Psoas muscle (tissue), 8 donors: ENCODE measurements at regions of chr17 and their contacts with region 1.

Region 1: DNA sequence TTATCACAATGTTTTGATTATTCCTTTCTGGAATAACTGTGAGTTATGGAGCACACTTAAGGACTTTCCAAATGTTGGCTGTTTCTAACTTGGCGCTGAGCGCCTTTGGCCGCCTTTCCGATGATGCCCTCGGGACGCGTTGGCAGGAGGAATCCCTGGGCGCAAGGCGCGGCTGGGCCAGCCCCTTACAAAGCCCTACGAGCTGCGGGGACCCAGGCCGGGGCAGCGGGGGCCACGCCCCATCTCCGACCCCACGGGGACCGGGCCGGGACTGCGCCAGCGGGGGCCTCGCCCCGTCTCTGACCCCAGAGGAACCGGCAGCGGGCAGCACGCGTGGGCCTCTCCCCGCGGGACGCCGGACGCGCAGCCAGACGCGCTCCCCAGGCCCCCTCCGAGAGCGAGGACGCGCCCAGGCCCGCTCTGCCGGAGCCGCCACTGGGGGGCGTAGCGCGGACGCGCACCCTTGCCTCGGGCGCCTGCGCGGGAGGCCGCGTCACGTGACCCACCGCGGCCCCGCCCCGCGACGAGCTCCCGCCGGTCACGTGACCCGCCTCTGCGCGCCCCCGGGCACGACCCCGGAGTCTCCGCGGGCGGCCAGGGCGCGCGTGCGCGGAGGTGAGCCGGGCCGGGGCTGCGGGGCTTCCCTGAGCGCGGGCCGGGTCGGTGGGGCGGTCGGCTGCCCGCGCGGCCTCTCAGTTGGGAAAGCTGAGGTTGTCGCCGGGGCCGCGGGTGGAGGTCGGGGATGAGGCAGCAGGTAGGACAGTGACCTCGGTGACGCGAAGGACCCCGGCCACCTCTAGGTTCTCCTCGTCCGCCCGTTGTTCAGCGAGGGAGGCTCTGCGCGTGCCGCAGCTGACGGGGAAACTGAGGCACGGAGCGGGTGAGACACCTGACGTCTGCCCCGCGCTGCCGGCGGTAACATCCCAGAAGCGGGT is at the start of gene GAA:
- DNase-seq: peak; percentile 88 to 94
- ATAC-seq: peak; percentile 91 to 95 (median 93)
- H3K4me3 ChIP-seq: peak within 1 kb of the TSS; percentile 97
- H3K27ac ChIP-seq: peak within 1 kb of the TSS; percentile 86
- H3K4me1 ChIP-seq: peaks cover 13% of the 10 kb centered on the region
- H3K27me3 ChIP-seq: no peaks in the 10 kb centered on the region
- CTCF ChIP-seq: peak; percentile 83
- total RNA-seq, gene GAA: 27.3 to 42.4 (median 34.3) TPM

Region 2: DNA sequence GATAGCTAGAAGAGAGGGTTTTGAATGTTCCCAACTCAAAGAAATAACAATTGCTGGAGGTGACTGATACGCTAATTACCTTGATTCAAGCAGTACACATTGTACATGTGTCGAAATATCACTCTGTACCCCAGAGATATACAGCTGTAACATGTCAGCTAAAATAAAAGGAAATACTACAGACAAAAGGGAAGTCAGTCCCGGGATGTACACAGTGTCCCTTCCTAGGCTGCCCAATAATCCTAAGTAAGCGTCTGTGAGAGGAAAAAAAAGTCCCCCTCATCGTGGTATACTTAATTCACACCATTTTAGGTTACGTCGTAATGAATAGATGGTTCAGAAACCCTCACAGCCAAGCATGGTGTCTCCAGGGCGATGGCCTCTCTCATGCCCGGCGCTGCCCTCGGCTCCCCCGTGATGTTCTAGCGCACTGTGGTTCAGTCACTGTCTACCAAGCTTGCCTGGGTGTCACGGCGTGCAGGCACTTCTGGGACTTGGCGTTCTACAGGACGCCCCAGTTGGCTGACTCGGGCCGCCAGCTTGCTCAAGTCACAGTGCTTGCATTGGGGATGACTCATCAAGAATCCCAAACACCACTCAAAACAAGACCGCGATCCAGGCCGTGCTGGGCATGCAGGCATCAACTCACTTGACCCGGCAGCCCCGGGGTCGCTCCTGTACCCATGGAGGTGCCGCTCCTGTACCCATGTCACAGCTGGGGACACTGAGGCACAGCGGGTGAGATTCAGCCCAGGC is 37.3 kb before region 1 on chr17:
- intact Hi-C with region 1: no loop called
- DNase-seq: peak; percentile 76 to 84
- ATAC-seq: peak; percentile 82 to 96 (median 94)
- H3K4me3 ChIP-seq: no peak overlapping the region
- H3K27ac ChIP-seq: no peak overlapping the region
- H3K4me1 ChIP-seq: peaks cover 8% of the 10 kb centered on the region
- H3K27me3 ChIP-seq: no peaks in the 10 kb centered on the region
- CTCF ChIP-seq: no peak

Region 3: DNA sequence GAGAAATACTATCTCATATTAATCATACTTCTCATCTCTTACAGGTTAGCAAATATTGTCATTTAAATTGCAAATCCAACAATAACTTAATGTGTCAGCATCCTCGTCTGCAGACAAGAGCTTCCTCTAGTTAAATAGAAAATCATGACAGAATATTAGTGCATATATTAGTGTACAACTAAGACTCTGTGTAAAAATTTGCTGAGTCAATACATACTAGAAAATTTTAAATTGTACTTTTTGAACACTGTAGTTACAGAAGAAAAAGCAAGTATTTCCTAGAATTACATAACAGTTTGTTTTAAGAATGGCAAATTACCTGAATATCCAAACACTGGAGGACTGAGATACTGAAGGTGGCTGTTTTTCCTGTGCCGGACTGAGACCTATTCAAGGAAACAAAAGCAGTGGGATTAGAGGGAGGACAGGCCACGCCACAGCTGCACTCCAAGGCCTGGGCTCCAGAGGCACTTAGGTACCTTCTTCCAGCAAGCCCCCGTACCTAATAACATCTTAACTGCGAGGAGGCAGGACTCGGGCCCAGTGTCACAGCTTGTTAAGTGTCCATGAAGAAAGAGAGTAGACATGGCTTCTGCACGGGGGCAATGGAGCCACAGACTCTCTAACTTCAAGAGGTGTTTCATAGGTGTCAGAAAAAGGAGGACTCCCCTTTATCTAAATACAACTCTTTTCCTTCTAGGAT is 40.3 kb after region 1 on chr17:
- intact Hi-C with region 1: loop called in 1 of 2 experiments (anchors 5 kb)
- DNase-seq: no peak
- ATAC-seq: no peak
- H3K4me3 ChIP-seq: no peak overlapping the region
- H3K27ac ChIP-seq: no peak overlapping the region
- H3K4me1 ChIP-seq: peaks cover 11% of the 10 kb centered on the region
- H3K27me3 ChIP-seq: no peaks in the 10 kb centered on the region
- CTCF ChIP-seq: no peak